ENCODE measurements at regions of chr16 and their contacts with region 1.

Region 1: DNA sequence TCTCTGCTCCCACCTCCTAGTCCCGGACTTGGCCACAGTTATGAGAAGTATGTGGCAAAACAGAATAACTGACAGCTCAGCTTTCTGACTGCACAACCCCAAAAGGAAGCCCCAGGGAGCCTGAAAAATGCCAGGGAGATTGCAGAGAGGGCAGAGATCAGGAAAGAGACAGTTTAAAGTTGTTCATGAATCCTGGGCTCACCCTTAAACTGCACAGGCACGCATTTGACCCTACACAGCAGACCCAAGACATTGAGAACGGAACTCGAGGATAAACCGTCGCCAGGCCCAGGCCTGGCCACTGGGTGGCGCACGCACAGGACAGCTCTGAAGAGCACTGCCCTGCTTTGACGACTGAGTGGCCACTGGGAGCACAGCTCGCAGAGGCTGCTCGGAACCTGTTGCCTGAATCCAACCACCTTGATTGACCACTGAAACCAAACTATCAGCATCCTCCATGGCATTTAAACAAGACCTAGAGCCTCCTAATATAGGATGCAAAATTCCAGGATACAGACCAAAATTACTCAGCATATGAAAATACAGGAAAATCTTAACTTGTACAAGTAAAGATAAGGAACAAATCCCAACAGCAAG is 114.0 kb downstream of the C16orf95 start:
- DNase-seq: peak; percentile 75
- ATAC-seq: peak; percentile 45
- H3K4me3 ChIP-seq: no peak overlapping the region
- H3K27ac ChIP-seq: no peak overlapping the region
- H3K4me1 ChIP-seq: peaks cover 34% of the 10 kb centered on the region
- H3K27me3 ChIP-seq: no peaks in the 10 kb centered on the region
- CTCF ChIP-seq: peak; percentile 84

Region 2: DNA sequence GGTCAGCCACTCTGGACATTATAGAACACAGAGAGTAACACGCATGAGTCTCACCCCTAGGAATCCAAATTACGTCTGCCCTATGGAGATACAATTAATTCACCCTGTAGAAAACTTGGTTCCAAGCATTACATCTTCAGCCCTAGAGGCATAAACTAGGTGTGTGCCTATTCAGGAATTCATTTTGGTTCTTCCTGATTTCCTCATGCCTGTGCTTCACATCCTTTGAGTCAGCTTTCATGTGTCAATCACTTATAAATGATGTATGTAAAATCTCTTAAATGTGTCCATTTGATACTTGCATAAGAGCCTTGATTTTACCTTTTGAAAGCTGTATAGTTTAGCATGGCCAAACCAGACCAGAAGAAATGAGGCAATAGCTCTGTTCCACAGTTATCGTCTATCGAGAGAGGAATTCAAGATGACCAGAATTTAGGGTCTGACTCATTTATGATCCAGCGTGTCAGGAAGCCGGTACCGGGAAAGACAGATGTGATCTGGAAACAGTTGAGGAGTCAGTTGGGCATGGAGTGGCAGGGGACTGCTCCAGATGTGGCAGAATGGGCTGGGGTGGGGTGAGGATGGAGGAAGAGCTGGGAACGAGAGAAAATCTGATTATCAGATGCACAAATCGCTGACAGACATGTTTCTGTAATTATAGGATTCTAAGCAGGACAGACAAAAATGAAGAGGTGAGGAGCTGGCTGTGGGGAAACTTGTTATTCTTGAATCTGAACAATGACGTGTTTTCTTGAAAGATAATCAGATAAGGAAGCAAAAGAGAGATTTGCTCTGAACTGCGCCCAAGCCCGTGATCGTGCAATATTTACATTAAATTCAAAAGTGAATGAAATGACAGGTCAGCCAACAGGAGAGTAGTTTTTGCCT is 37.3 kb after region 1 on chr16:
- CTCF ChIA-PET with region 1: interaction called, 3 read pairs
- POLR2A ChIA-PET with region 1: no interaction called
- intact Hi-C with region 1: loop called (anchors 5 kb)
- DNase-seq: peak; percentile 84
- ATAC-seq: peak; percentile 68
- H3K4me3 ChIP-seq: peak overlapping the region; percentile 51
- H3K27ac ChIP-seq: peak overlapping the region; percentile 92
- H3K4me1 ChIP-seq: peaks cover 41% of the 10 kb centered on the region
- H3K27me3 ChIP-seq: no peaks in the 10 kb centered on the region
- CTCF ChIP-seq: no peak

Region 3: GRCh38 chr16:87250431-87250960 is 47.3 kb after region 1 on chr16:
- CTCF ChIA-PET with region 1: no interaction called
- POLR2A ChIA-PET with region 1: no interaction called
- intact Hi-C with region 1: no loop called
- DNase-seq: no peak
- ATAC-seq: no peak
- H3K4me3 ChIP-seq: no peak overlapping the region
- H3K27ac ChIP-seq: no peak overlapping the region
- H3K4me1 ChIP-seq: no peaks in the 10 kb centered on the region
- H3K27me3 ChIP-seq: no peaks in the 10 kb centered on the region
- CTCF ChIP-seq: no peak

Region 4: DNA sequence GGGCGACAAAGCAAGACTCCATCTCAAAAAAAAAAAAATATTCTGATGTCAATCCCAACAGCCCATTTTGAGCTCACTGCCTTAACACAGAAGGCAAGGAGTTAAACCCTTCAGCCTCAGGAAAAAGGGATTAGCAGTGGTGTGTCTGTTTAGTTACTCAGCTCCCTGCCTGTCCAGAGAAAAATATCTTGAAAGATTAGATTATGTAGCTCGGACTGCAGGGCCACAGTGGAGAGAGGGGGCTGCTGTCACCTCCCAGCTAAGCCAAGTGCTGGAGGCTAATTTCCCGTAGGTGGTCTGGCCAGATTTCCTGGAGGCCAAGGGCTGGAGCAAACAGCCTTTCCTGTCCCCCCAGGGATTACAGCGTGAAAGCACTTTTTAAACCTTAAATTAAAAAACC is 63.7 kb after region 1 on chr16:
- CTCF ChIA-PET with region 1: interaction called, 15 read pairs
- POLR2A ChIA-PET with region 1: no interaction called
- intact Hi-C with region 1: no loop called
- DNase-seq: no peak
- ATAC-seq: no peak
- H3K4me3 ChIP-seq: no peak overlapping the region
- H3K27ac ChIP-seq: no peak overlapping the region
- H3K4me1 ChIP-seq: no peaks in the 10 kb centered on the region
- H3K27me3 ChIP-seq: no peaks in the 10 kb centered on the region
- CTCF ChIP-seq: no peak